GM10248 (cell line): ENCODE measurements at regions of chr12 and their contacts with region 1.

Region 1: GRCh38 chr12:120580787-120581723 is at the start of gene POP5:
- DNase-seq: peak; percentile 95
- CTCF ChIP-seq: no peak

Region 2: GRCh38 chr12:120432772-120433525 is 148.1 kb before region 1 on chr12:
- CTCF ChIA-PET with region 1: no interaction called
- POLR2A ChIA-PET with region 1: no interaction called
- DNase-seq: no peak
- CTCF ChIP-seq: no peak

Region 3: DNA sequence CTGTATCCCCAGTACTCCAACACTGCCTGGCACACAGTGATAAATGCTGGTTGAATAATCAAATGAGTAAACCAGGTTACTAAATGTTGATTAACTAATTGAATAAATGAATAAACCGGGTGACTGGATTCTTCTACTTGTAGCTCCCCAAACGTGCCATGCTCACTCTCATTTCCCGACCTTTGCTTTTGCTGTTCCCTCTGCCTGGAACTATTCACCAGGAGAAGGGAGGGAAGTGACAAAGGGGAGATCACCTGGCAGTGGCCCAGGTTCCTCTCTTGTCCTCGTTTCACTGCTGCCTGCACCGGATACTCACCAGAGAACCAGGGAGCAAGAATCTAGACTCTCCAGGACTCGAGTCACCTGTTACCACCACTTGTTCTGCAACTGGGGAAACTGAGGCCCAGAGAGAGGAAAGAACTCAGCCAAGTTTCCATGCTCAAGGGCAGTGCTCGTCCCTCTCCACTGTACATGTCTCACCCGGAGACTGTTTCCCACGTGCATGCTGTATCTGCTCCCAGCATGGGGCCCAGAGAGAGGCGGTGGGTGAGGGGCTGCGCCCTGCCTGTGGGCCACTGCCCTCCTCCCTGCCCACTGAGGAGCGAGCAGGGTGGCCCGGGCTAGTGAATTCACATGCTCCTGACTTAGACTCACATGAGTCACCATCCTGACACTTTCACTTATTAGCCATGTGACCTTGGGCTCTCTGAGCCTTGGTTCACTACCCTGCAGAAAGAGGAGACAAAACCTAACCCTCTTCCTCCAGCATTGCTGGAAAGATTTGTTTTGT is 17.8 kb after region 1 on chr12:
- CTCF ChIA-PET with region 1: interaction called, 16 read pairs
- POLR2A ChIA-PET with region 1: interaction called, 4 read pairs
- DNase-seq: no peak
- CTCF ChIP-seq: no peak

Region 4: DNA sequence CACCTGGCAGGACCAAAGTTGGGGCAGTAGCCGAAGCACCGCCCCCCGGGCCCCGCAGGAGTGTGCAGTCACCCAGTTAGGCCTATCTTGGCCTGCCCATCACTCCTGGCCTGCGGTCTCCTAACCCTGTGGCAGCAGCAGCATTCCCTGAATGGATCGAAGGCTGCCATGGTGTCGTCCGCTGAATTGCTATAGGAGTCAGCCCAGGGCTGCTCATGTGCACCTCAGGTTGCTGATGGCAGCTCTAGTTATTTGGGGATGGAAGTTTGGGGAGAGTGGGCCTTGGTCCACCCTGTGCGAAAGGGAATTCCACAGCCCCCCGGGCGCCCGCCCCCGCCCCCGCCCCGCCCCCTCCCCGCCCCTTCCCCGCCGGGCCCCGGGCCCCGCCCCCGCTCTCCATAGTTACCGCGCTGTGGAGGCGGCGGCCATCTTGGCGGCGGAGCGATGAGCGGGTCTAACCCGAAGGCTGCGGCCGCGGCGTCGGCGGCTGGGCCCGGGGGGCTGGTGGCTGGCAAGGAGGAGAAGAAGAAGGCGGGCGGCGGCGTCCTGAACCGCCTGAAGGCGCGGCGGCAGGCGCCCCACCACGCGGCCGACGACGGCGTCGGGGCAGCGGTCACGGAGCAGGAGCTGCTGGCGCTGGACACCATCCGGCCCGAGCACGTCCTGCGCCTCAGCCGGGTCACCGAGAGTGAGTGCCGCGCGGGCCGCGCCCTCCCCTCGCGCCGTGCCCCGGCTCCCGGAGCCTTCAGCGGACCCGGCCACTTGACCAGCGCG is 129.2 kb after region 1 on chr12 and contains the start of gene UNC119B:
- CTCF ChIA-PET with region 1: interaction called, 15 read pairs
- POLR2A ChIA-PET with region 1: no interaction called
- DNase-seq: peak; percentile 88
- CTCF ChIP-seq: no peak